Panc1 (cell line): ENCODE measurements at regions of chr3 and their contacts with region 1.

Region 1: DNA sequence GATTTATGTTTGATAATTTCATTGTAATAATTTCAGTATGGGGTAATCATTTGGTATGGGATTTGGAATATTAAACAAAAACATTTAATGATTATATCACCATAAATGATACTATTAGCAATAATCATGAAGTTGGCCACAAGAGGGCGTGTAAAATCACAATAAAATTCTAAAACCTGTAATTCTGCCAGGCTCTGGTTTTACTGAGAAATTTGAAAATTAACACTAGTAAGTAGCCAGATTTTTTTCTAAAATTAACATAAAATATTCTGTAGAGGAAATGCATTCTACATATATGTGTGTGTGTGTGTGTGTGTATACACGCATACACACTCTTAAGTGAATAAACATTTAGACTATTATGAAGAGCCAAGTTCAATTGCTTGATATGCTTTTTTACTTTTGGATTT is 40.5 kb downstream of the FEZF2 start:
- DNase-seq: no peak
- ATAC-seq: no peak
- H3K4me3 ChIP-seq: no peak overlapping the region
- H3K27ac ChIP-seq: no peak overlapping the region
- H3K4me1 ChIP-seq: no peaks in the 10 kb centered on the region
- H3K27me3 ChIP-seq: no peaks in the 10 kb centered on the region
- CTCF ChIP-seq: peak; percentile 46; the same call in 1 of the 2 replicates

Region 2: DNA sequence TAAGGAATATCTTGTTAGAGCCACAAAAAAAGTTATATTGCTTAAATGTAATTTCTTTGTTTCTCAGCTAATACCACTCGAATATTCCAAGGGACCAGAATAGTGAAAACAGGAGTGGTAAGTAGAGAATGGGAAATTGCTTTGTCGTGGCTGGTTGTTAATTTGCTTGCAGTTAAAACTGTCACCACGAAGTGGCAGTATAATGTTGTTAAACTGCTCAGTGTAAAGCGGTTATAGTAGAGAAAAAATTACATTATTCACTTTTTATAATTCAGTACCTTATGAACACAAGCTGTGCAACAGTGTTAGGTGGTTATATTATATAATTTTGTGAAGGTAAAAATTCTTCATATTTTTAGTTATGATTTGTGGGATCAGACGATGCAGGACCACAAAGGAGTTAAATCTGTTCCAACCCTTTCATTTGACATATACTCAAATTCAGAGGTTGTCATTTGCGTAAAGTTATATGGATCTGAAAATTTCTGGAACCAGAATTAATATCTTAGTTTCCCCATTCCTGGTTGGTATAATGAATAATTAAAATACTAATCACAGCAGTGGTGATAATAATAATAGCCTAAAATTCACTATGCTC is 131.3 kb before region 1 on chr3:
- CTCF ChIA-PET with region 1: no interaction called
- POLR2A ChIA-PET with region 1: no interaction called
- in situ Hi-C with region 1: no loop called
- intact Hi-C with region 1: loop called (anchors 10 kb)
- DNase-seq: peak; percentile 8
- ATAC-seq: peak; percentile 56; the same call in 1 of the 2 replicates
- H3K4me3 ChIP-seq: no peak overlapping the region
- H3K27ac ChIP-seq: no peak overlapping the region
- H3K4me1 ChIP-seq: no peaks in the 10 kb centered on the region
- H3K27me3 ChIP-seq: no peaks in the 10 kb centered on the region
- CTCF ChIP-seq: peak; percentile 58; the same call in 1 of the 2 replicates

Region 3: DNA sequence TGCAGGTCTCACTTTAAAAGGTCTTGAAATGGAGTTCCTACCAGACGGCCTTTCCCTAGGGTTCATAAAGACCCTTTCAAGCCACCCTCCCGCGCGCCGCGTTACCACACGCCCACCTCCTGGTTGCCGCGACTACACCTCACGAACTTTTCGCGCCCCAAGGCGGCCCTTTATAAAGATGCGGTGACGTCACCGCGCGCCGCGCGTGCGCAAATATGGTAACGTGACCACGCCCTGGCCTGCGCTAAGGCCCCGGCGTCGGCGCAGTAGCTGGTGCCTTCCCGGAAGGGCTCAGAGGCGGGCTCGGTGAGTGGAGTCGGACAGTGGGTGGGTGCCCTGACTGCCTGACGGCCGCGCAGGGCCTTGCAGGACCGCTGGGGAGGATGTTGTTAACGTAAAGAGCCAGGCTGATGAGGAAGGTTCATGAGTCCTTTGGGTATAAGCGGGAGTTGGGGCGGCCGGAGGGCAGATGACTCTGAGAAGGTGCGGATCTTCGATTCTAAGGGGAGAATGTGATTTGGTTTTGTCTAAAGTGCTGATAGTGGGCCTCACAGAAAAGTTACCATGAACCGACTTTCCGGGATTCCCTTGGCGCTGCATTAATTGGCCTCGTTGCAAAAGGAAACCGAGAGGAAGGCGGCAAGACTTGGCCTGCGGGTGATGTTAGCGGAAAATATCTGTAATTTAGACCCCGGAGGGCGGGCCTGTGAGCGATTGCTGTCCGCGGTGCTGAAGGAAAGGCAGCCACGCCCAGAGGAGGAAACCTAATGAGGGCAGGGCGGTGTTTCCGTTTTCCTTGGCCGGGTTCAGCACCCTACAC is 13.9 kb before region 1 on chr3:
- CTCF ChIA-PET with region 1: no interaction called
- POLR2A ChIA-PET with region 1: no interaction called
- in situ Hi-C with region 1: no loop called
- intact Hi-C with region 1: no loop called
- DNase-seq: peak; percentile 46
- ATAC-seq: peak; percentile 100
- H3K4me3 ChIP-seq: peak overlapping the region; percentile 53 to 85
- H3K27ac ChIP-seq: peak overlapping the region; percentile 74
- H3K4me1 ChIP-seq: no peaks in the 10 kb centered on the region
- H3K27me3 ChIP-seq: no peaks in the 10 kb centered on the region
- CTCF ChIP-seq: no peak

Region 4: DNA sequence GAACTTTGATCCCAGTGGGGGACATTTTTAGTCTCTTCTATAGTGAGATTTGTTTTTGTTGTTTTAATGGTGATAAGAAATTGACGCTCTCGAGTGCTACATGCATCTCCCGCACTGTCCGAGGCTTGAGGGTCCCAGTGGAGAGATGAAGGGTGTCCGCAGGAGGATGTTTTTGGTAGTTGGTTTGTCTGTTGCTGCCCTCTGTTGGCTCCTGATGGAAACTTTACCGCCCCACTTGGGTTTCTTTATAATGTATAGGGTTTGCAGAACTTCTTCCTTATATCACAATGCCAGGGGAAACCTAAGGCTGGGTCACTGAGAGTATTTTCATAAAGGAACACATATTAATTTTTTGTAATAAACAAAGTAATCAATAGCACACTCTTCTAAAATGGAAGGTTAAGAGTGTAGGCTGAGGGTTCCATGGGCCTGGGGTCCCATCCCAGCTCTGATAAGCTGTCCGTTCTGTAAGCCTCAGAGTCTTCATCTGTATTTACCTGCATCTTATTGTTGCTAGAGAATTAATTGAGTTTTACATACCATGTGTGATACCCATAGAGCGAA is 225.8 kb after region 1 on chr3:
- CTCF ChIA-PET with region 1: no interaction called
- POLR2A ChIA-PET with region 1: no interaction called
- in situ Hi-C with region 1: no loop called
- intact Hi-C with region 1: loop called (anchors 1 kb)
- DNase-seq: no peak
- ATAC-seq: no peak
- H3K4me3 ChIP-seq: no peak overlapping the region
- H3K27ac ChIP-seq: no peak overlapping the region
- H3K4me1 ChIP-seq: no peaks in the 10 kb centered on the region
- H3K27me3 ChIP-seq: no peaks in the 10 kb centered on the region
- CTCF ChIP-seq: peak; percentile 73